Mammary epithelial cell (primary cell): ENCODE measurements at regions of chr2 and their contacts with region 1.

Region 1: GRCh38 chr2:53445386-53446072 is 322.1 kb upstream of the CHAC2 start:
- DNase-seq: peak; percentile 55
- H3K4me3 ChIP-seq: no peak overlapping the region
- H3K27ac ChIP-seq: no peak overlapping the region
- H3K4me1 ChIP-seq: peaks cover 6% of the 10 kb centered on the region
- H3K27me3 ChIP-seq: no peaks in the 10 kb centered on the region
- CTCF ChIP-seq: no peak

Region 2: DNA sequence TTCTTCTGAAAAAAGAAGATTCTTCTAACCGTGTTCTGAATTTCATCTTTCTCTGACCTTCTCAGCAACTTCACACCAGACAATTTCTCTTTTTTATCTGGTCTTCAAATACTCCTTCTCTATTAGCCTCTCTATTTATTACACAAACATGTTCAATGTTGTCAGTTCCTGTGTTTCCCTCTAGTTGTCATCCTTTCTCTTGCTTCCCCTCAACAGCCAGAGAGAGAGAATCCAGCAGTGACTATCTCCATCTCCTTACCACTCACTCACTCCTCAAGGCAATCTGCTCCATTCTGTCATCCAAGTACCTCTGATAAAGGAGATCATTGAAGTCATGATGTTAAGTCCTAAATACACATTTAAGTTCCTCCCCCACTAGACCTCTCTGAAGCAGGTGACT is 169.8 kb before region 1 on chr2:
- CTCF ChIA-PET with region 1: no interaction called
- dilution Hi-C with region 1: no loop called
- in situ Hi-C with region 1: no loop called
- intact Hi-C with region 1: loop called (anchors 10 kb)
- DNase-seq: peak; percentile 17
- H3K4me3 ChIP-seq: no peak overlapping the region
- H3K27ac ChIP-seq: no peak overlapping the region
- H3K4me1 ChIP-seq: no peaks in the 10 kb centered on the region
- H3K27me3 ChIP-seq: no peaks in the 10 kb centered on the region
- CTCF ChIP-seq: peak in 1 of 2 donors; percentile 19